CD14-positive monocyte (primary cell): ENCODE measurements at regions of chr20 and their contacts with region 1.

Region 1: DNA sequence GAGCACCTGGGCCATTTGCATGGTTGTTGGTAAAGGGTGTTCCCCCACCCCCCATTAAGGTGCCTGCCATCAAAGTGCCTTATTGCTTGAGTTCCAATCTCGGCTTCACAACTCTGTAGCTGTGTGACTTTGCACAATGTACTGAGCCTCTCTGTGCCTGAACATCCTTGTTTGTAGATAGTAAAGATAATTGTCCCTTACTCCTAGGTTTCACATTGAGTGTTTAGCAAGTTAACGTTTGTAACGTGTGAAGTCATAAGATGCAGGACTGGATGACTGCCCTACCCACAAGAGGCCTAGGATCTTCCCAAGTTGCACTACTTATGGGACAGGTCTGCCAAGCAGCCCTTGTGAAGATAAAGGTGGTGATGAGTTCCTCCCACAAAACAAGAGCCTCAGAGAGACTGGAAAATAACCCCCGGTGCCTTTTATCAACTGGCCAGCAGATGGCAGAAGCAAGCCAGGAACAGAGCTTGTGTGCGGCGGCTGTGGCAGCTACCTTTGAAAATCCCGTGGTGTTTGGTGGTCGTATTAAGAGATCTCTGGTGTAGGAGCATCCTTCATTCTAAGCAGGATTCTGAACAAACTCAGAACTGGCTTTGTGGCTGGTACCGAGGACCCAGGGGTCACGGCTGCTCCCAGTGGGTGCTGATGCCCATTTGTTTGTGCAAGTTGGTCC is 99.0 kb downstream of the CDH26 start:
- DNase-seq: peak; percentile 64 to 81 (median 73)
- H3K4me3 ChIP-seq: peak overlapping the region in 2 of 3 experiments; percentile 5 to 65
- H3K4me3 Mint-ChIP-seq: peak overlapping the region; percentile 68 to 87
- H3K27ac ChIP-seq: peak overlapping the region; percentile 93 to 97
- H3K27ac Mint-ChIP-seq: peak overlapping the region; percentile 96 to 100 (median 99)
- H3K4me1 ChIP-seq: peaks cover 83 to 87% of the 10 kb centered on the region in 2 donors
- H3K4me1 Mint-ChIP-seq: peaks cover 85% of the 10 kb centered on the region
- H3K27me3 ChIP-seq: no peaks in the 10 kb centered on the region
- H3K27me3 Mint-ChIP-seq: no peaks in the 10 kb centered on the region
- CTCF ChIP-seq: peak; percentile 89

Region 2: GRCh38 chr20:59866338-59866737 is 190.9 kb before region 1 on chr20:
- intact Hi-C with region 1: no loop called
- DNase-seq: no peak
- H3K4me3 ChIP-seq: no peak overlapping the region
- H3K4me3 Mint-ChIP-seq: no peak overlapping the region
- H3K27ac ChIP-seq: no peak overlapping the region
- H3K27ac Mint-ChIP-seq: no peak overlapping the region
- H3K4me1 ChIP-seq: no peaks in the 10 kb centered on the region
- H3K4me1 Mint-ChIP-seq: peaks cover 8% of the 10 kb centered on the region
- H3K27me3 ChIP-seq: peaks cover 0 to 2% of the 10 kb centered on the region in 2 donors
- H3K27me3 Mint-ChIP-seq: peaks cover 0 to 2% (median 0%) of the 10 kb centered on the region in 3 donors
- CTCF ChIP-seq: no peak

Region 3: DNA sequence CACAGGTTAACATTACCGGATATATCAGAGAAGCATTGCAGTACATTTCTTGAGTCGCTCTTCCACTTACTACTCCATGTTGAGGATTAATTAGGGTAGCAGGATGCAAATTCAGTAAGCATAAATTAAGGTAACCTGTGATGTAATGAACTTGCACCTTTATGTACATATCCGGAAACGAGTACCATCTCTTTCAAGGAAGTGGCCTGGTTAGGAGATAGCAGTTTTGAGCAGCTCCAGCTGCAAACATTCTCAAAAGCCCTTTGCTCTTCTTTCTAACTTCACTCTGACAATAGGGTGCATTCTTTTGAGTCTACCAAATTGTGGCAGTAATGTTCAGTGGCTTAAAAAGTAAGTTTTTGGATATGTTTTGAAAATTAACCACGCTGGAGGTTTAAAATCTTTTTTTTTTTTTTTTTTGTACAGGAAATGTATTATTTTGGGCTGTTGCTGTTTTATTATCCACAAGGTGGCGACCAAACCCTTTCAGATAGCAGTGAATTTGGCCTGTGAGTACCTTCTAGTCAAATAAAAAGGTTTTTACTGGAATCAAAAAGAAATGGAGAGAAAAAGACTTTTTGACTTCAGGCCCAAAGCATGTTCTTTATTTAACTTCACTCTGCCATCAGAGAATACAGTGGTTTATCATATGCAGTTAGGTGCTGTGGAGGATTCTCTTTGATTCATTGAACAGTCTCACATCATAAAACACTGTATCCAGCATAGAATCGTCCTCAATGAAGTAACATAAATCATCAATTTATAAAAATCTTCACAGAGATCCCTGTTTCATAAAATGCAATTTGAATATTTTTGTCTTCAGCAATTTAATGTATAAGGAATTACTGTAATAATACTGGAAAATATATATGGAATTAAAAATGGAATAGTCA is 108.2 kb before region 1 on chr20:
- intact Hi-C with region 1: loop called (anchors 5 to 10 kb)
- DNase-seq: peak; percentile 44 to 49 (median 44)
- H3K4me3 ChIP-seq: no peak overlapping the region
- H3K4me3 Mint-ChIP-seq: no peak overlapping the region
- H3K27ac ChIP-seq: peak overlapping the region in 1 of 2 donors; percentile 64
- H3K27ac Mint-ChIP-seq: peak overlapping the region in 5 of 7 donors; percentile 41 to 82 (median 71)
- H3K4me1 ChIP-seq: peaks cover 18 to 26% of the 10 kb centered on the region in 2 donors
- H3K4me1 Mint-ChIP-seq: peaks cover 38% of the 10 kb centered on the region
- H3K27me3 ChIP-seq: no peaks in the 10 kb centered on the region
- H3K27me3 Mint-ChIP-seq: peaks cover 0 to 3% (median 0%) of the 10 kb centered on the region in 3 donors
- CTCF ChIP-seq: peak; percentile 83

Region 4: DNA sequence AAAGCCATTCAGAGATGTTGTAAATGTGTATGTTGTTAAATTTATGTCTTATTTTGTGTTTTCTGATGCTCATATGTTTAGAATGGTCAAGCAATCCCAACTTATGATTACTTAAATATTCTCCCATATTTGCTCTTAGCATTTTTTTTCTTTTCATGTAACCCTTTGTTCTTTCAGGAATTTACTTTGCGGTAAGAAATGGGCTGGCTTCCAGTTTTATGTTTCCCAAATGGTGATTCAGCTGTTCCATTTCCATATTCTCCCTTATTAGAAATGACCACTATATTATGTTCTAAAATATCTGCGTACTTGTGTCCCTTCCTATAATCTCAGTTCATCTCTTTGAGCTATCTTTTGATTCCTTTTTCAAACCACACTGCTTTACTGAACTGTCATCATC is 14.7 kb after region 1 on chr20:
- intact Hi-C with region 1: no loop called
- DNase-seq: no peak
- H3K4me3 ChIP-seq: no peak overlapping the region
- H3K4me3 Mint-ChIP-seq: no peak overlapping the region
- H3K27ac ChIP-seq: no peak overlapping the region
- H3K27ac Mint-ChIP-seq: no peak overlapping the region
- H3K4me1 ChIP-seq: peaks cover under 1% of the 10 kb centered on the region in 2 donors
- H3K4me1 Mint-ChIP-seq: peaks cover 2% of the 10 kb centered on the region
- H3K27me3 ChIP-seq: no peaks in the 10 kb centered on the region
- H3K27me3 Mint-ChIP-seq: no peaks in the 10 kb centered on the region
- CTCF ChIP-seq: no peak

Region 5: DNA sequence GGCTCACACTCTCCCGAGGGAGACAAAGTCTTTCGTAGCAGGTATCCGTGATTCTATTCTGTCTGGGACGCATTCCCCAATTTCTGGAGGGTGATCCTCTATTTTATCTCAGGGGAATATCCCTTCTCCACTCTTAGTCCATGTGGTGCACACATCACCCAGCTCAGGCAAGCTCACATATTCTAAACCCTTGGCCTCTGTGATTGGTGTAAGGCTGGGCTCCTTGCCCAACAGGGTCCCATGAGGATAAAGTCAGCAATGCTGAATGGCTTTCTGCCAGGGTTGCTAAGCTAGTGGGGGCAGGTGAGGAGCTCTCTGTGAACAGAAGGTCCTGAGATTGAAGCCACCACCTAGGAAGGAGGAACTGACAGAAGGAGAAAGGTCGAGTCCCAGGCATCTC is 38.2 kb after region 1 on chr20:
- intact Hi-C with region 1: loop called in 1 of 2 experiments (anchors 5 kb)
- DNase-seq: no peak
- H3K4me3 ChIP-seq: no peak overlapping the region
- H3K4me3 Mint-ChIP-seq: no peak overlapping the region
- H3K27ac ChIP-seq: no peak overlapping the region
- H3K27ac Mint-ChIP-seq: no peak overlapping the region
- H3K4me1 ChIP-seq: peaks cover 32 to 37% of the 10 kb centered on the region in 2 donors
- H3K4me1 Mint-ChIP-seq: peaks cover 32% of the 10 kb centered on the region
- H3K27me3 ChIP-seq: no peaks in the 10 kb centered on the region
- H3K27me3 Mint-ChIP-seq: peaks cover 1 to 4% (median 3%) of the 10 kb centered on the region in 3 donors
- CTCF ChIP-seq: no peak

Region 6: GRCh38 chr20:60131375-60131774 is 74.1 kb after region 1 on chr20:
- intact Hi-C with region 1: loop called (anchors 5 kb)
- DNase-seq: peak; percentile 27 to 77 (median 58)
- H3K4me3 ChIP-seq: peak overlapping the region in 1 of 3 experiments; percentile 26
- H3K4me3 Mint-ChIP-seq: peak overlapping the region; percentile 52 to 62
- H3K27ac ChIP-seq: no peak overlapping the region
- H3K27ac Mint-ChIP-seq: peak overlapping the region; percentile 54 to 90 (median 77)
- H3K4me1 ChIP-seq: peaks cover 41 to 51% of the 10 kb centered on the region in 2 donors
- H3K4me1 Mint-ChIP-seq: peaks cover 60% of the 10 kb centered on the region
- H3K27me3 ChIP-seq: no peaks in the 10 kb centered on the region
- H3K27me3 Mint-ChIP-seq: peaks cover 0 to 6% (median 4%) of the 10 kb centered on the region in 3 donors
- CTCF ChIP-seq: no peak

Region 7: GRCh38 chr20:60210779-60211617 is 153.7 kb after region 1 on chr20:
- intact Hi-C with region 1: loop called in 1 of 2 experiments (anchors 10 kb)
- DNase-seq: peak; percentile 57 to 64 (median 62)
- H3K4me3 ChIP-seq: no peak overlapping the region
- H3K4me3 Mint-ChIP-seq: peak overlapping the region; percentile 39 to 73
- H3K27ac ChIP-seq: no peak overlapping the region
- H3K27ac Mint-ChIP-seq: peak overlapping the region in 2 of 7 donors; percentile 11 to 26
- H3K4me1 ChIP-seq: no peaks in the 10 kb centered on the region
- H3K4me1 Mint-ChIP-seq: peaks cover 17% of the 10 kb centered on the region
- H3K27me3 ChIP-seq: no peaks in the 10 kb centered on the region
- H3K27me3 Mint-ChIP-seq: peaks cover 2 to 11% (median 2%) of the 10 kb centered on the region in 3 donors
- CTCF ChIP-seq: peak; percentile 96

Region 8: DNA sequence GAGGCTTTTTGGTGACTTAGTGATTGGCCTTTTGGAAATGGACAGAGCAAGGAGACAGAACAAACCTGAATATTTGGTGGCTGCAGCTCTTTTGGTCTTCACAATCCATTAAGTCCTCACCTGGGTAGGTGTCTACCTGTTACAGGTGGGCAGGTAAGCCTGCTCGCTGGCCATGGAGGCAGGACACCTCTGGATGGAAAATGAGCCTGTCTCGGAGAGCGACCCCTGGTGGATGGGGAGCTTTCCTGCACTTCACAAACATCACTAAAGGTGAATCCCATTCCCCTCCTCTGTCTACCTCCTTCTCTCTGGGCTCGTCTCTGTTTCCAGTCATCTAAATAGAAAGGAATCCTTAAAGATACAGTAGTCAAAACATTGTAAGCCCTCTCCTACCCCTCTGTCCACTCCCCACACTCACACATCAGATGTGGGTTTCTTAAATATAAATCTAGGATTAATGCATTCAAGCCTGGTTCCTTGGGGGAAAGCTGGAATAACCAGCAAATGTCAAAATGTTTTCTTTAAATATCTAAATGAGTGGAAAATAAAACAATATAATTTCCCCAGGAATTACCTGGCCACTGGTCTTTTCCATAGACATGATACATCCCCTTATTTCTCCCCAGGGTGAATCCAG is 205.8 kb after region 1 on chr20:
- intact Hi-C with region 1: loop called (anchors 2 to 10 kb)
- DNase-seq: peak; percentile 45 to 52 (median 51)
- H3K4me3 ChIP-seq: no peak overlapping the region
- H3K4me3 Mint-ChIP-seq: no peak overlapping the region
- H3K27ac ChIP-seq: no peak overlapping the region
- H3K27ac Mint-ChIP-seq: no peak overlapping the region
- H3K4me1 ChIP-seq: no peaks in the 10 kb centered on the region
- H3K4me1 Mint-ChIP-seq: peaks cover 14% of the 10 kb centered on the region
- H3K27me3 ChIP-seq: no peaks in the 10 kb centered on the region
- H3K27me3 Mint-ChIP-seq: no peaks in the 10 kb centered on the region
- CTCF ChIP-seq: peak; percentile 96